ENCODE measurements at regions of chr5 and their contacts with region 1.

Region 1: DNA sequence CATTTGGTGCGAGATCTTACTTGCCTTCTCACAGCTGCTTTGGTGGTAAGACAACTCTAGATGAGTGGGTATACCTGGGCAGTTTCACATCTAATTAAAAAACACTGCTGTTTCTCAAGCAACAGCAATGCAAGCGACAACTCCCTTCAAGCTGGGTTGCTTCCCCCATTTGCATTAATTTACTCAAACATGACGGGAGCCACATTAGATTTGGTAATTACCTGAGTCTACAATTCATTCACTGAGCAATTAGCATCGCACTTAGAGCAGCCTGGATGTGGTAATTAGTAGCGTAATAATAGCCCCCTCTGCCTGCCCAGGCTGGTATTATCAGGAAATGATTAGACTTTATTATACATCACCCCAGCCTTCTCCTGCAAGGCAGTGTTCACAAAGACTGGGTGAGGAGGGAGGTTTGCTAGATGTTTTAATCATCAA is 73.4 kb downstream of the FBXO38 start:
- DNase-seq: no peak
- ATAC-seq: no peak

Region 2: DNA sequence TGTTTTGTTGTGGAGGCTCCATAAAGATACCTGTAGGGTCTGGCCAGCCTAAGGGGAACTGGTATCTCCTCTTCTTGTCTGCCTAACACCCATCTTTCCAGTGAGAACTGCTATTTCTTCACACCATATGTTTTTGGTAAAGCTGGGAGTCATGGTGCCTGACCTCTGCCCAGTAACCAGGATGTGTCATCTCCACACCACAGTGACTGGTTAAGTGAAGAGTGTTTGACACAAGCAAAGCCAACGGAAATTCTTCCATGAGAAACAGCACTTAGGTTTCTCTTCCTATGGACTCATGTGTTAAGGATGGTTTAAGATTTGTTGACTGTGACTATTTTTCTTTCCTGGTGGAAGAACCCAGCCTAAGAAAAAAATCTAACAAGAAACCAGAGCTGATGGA is 85.6 kb after region 1 on chr5:
- intact Hi-C with region 1: loop called (anchors 5 kb)
- DNase-seq: no peak
- ATAC-seq: no peak

Region 3: GRCh38 chr5:148569948-148570347 is 112.7 kb after region 1 on chr5:
- intact Hi-C with region 1: loop called (anchors 10 kb)
- DNase-seq: no peak
- ATAC-seq: no peak

Region 4: GRCh38 chr5:148849461-148849860 is 392.3 kb after region 1 on chr5:
- intact Hi-C with region 1: no loop called
- DNase-seq: no peak
- ATAC-seq: peak; percentile 42